PC-9 (cell line): ENCODE measurements at regions of chr1 and their contacts with region 1.

Region 1: GRCh38 chr1:46179138-46180081 is 3.1 kb upstream of the P3R3URF start:
- DNase-seq: peak; percentile 74 to 88
- H3K4me3 ChIP-seq: peak overlapping the region; percentile 83; the same call in 1 of the 2 replicates
- H3K27ac ChIP-seq: peak overlapping the region; percentile 91
- H3K4me1 ChIP-seq: peaks cover 65% of the 10 kb centered on the region
- H3K27me3 ChIP-seq: no peaks in the 10 kb centered on the region
- CTCF ChIP-seq: peak; percentile 95

Region 2: DNA sequence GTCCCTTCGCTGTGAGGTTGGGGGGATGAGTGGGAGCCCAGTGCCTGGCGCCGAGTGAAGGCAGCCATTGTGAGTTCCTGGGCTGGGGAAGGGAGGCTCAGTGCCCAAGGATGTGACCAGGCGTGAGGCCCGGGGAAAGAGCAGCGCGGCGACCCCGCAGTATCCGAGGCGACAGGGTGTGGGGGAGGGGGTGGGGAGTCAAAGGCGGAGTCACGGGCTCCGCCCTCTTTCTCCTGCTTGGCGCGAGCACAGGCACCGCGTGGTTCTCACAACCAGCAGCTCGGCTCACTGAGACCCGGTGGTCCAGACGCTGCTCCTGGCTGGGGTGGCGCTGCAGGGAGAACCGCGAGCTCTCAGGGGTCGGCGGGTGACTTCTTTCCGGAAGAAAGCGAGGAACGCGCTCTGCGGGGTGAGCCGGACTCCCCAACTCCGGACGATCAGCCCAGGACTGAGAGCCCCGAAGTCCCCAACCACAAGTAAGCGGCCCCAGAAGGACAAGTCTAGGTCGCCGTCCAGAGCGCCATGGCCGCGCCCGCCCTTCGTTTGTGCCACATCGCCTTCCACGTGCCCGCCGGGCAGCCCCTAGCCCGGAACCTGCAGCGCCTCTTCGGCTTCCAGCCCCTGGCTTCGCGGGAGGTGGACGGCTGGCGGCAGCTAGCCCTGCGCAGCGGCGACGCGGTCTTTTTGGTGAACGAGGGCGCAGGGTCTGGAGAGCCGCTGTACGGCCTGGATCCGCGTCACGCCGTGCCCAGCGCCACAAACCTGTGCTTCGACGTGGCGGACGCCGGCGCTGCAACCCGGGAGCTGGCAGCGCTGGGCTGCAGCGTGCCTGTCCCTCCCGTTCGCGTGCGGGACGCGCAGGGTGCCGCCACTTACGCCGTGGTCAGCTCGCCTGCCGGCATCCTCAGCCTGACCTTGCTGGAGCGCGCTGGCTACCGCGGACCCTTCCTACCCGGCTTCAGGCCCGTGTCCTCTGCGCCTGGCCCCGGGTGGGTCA is 852.5 kb before region 1 on chr1 and contains the start of gene HPDL:
- CTCF ChIA-PET with region 1: no interaction called
- POLR2A ChIA-PET with region 1: interaction called, 4 read pairs
- intact Hi-C with region 1: loop called (anchors 5 kb)
- DNase-seq: peak in 1 of 2 experiments; percentile 47
- H3K4me3 ChIP-seq: peak within 1 kb of the TSS; percentile 85
- H3K27ac ChIP-seq: peak within 1 kb of the TSS; percentile 77
- H3K4me1 ChIP-seq: peaks cover 41% of the 10 kb centered on the region
- H3K27me3 ChIP-seq: no peaks in the 10 kb centered on the region
- CTCF ChIP-seq: no peak
- total RNA-seq, gene HPDL: 10.4 and 12.7 TPM in 2 replicates

Region 3: GRCh38 chr1:45803301-45803780 is 376.1 kb before region 1 on chr1 and contains the start of gene MAST2:
- CTCF ChIA-PET with region 1: no interaction called
- POLR2A ChIA-PET with region 1: interaction called, 6 read pairs
- intact Hi-C with region 1: loop called (anchors 5 kb)
- DNase-seq: peak; percentile 59 to 95
- H3K4me3 ChIP-seq: peak within 1 kb of the TSS; percentile 67
- H3K27ac ChIP-seq: peak within 1 kb of the TSS; percentile 70
- H3K4me1 ChIP-seq: peaks cover 19% of the 10 kb centered on the region
- H3K27me3 ChIP-seq: no peaks in the 10 kb centered on the region
- CTCF ChIP-seq: no peak
- total RNA-seq, gene MAST2: 58.8 and 69.3 TPM in 2 replicates

Region 4: GRCh38 chr1:46036894-46037839 is 142.2 kb before region 1 on chr1:
- CTCF ChIA-PET with region 1: no interaction called
- POLR2A ChIA-PET with region 1: interaction called, 13 read pairs
- intact Hi-C with region 1: loop called (anchors 1 kb)
- DNase-seq: peak; percentile 66 to 87
- H3K4me3 ChIP-seq: no peak overlapping the region
- H3K27ac ChIP-seq: no peak overlapping the region; the same call in 1 of the 2 replicates
- H3K4me1 ChIP-seq: peaks cover 24% of the 10 kb centered on the region
- H3K27me3 ChIP-seq: no peaks in the 10 kb centered on the region
- CTCF ChIP-seq: peak; percentile 97

Region 5: DNA sequence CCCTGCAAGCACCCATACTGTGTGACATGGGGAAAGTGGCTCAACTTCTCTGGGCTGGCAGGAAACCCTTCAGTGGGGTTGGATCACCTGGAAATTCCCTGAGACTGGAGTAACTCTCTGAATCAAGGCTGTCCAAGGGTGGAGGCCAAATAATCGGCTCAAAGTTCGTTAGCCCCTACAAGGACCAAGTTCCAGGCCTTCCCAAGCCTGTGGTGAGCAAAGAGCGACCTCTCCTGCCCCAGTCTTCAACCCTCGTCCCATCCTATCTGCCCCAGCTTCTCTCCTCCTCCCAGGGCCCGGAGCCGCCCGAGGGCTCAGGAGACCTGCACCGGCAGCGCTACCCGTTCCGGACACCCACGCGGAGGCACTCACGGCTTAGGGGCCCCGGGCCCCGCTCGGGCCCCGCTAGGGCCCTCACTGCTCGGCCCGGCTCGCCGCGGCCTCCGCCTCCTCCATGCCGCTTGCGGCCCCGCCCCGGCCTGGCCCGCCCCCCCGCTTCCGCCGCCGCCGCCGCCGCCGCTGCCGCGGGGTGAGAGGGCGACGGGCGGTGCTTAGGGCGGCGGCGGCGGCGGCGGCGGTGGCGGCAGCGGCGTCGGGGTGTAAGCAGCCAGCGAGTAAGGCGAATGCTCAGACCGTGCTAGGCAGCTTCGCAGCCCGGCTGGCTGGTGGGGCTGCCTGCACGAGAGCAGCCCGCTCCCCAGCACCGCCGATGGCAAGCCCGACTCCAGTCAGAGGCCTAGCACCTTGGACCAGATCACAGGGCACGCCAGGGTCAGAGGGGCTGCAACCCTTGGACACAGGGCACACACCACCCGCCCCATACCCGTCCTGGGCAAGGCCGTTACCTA is 18.8 kb after region 1 on chr1 and contains the start of gene POMGNT1:
- CTCF ChIA-PET with region 1: interaction called, 7 read pairs
- POLR2A ChIA-PET with region 1: interaction called, 7 read pairs
- intact Hi-C with region 1: loop called (anchors 1 kb)
- DNase-seq: peak in 1 of 2 experiments; percentile 83
- H3K4me3 ChIP-seq: peak within 1 kb of the TSS; percentile 87
- H3K27ac ChIP-seq: peak within 1 kb of the TSS; percentile 43
- H3K4me1 ChIP-seq: peaks cover 14% of the 10 kb centered on the region
- H3K27me3 ChIP-seq: no peaks in the 10 kb centered on the region
- CTCF ChIP-seq: no peak
- total RNA-seq, gene POMGNT1: 82.6 and 97.4 TPM in 2 replicates

Region 6: DNA sequence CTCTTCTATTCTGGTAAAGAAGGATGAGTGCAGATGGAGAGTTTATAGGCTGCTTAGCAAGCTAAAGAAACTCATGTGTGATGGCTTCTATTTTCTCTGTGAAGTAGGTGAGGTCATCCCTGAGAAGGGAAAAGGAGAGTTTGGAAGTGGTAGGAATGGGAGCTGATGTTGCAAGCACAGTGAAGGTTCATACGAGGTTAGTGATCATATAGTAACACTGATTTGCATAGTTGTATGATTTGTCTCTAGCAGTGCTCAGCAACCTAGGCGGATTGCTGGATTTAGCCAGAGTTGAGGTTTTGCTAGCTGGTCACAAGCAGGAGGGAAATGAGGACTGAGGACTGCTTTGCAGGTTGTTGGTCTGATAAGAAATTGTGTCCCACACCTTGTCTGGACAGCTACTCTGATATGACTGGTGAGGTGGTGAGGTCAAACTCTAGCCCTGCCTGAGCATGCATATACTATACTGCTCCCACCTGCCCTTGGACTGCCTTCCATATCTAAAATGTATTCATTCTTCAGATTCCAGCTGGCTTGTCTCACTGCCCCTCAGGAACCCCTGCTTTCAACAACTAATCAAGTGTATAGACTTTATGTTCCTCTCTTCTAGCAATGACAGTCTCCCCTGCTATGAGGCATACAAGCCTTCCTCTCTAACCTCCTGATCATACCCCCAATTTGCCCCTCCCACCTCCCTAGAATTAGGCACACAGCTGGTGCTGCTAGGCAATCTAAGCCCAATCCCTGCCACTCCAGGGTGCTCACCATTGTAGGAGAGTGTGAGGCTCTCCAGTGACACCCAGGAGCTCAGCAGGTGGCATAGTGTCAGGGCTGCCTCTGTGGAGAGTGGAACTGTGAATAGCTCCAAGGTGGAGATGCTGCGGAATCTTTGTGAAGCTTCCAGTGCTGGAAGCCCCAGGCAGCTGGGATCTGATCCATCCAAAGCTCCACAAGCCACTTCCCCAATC is 105.5 kb after region 1 on chr1:
- CTCF ChIA-PET with region 1: no interaction called
- POLR2A ChIA-PET with region 1: no interaction called
- intact Hi-C with region 1: no loop called
- DNase-seq: peak in 1 of 2 experiments; percentile 34
- H3K4me3 ChIP-seq: no peak overlapping the region
- H3K27ac ChIP-seq: no peak overlapping the region
- H3K4me1 ChIP-seq: peaks cover 12% of the 10 kb centered on the region
- H3K27me3 ChIP-seq: no peaks in the 10 kb centered on the region
- CTCF ChIP-seq: no peak

Region 7: GRCh38 chr1:46303038-46303871 is 123.8 kb after region 1 on chr1 and contains the starts of genes LRRC41 and UQCRH:
- CTCF ChIA-PET with region 1: no interaction called
- POLR2A ChIA-PET with region 1: no interaction called
- intact Hi-C with region 1: loop called (anchors 2 kb)
- DNase-seq: peak; percentile 94 to 95
- H3K4me3 ChIP-seq: peak within 1 kb of the TSS; percentile 95
- H3K27ac ChIP-seq: peak within 1 kb of the TSS; percentile 87
- H3K4me1 ChIP-seq: peaks cover 35% of the 10 kb centered on the region
- H3K27me3 ChIP-seq: no peaks in the 10 kb centered on the region
- CTCF ChIP-seq: 0 out of 2 replicates have a peak, but pooled peaks have one; percentile 12
- total RNA-seq, gene LRRC41: 65.9 and 66.3 TPM in 2 replicates
- total RNA-seq, gene UQCRH: 457 and 551 TPM in 2 replicates

Region 8: GRCh38 chr1:46699666-46700065 is 520.3 kb after region 1 on chr1:
- CTCF ChIA-PET with region 1: no interaction called
- POLR2A ChIA-PET with region 1: no interaction called
- intact Hi-C with region 1: no loop called
- DNase-seq: no peak
- H3K4me3 ChIP-seq: no peak overlapping the region
- H3K27ac ChIP-seq: no peak overlapping the region
- H3K4me1 ChIP-seq: no peaks in the 10 kb centered on the region
- H3K27me3 ChIP-seq: no peaks in the 10 kb centered on the region
- CTCF ChIP-seq: no peak